ENCODE measurements at regions of chr16 and their contacts with region 1.

Region 1: DNA sequence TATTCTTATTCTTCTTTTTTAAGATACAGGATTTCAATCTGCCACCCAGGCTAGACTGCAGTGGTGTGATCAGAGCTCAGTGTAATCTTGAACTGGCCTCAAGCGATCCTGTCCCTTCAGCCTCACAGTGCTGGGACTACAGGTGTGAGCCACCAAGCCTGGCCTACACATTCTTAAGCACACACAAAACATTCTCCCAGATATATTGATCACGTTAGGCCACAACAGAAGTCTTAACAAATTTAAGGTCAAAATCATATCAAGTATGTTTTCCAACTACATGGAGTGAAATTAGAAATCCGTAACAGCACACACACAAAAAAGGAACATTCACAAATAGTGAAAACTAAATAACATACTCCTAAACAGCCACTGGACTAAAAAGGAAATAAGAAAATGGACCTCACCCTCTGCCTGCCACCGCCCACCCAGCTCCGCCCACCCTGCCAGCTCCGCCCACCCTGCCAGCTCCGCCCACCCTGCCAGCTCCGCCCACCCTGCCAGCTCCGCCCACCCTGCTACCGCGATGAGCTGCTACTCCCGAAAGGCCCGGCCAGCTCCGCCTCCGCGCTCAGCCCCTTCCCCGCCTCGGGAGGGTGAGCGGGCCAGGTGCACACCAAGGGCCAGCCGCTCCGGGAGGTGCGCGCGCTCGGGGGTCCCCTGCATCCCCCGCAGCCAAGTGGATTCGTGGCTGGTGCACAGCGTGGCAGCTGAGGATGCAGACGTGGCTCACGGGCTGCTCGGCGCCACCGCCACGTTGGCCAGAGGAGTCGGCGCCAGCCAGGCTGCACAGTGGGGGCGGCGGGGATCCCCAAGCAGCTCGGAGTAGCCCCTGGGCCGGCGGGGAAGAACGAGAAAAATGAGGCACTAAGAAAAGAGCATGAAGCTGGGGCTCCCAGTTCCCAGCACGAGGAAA is 41.2 kb downstream of the C16orf87 start:
- DNase-seq: peak; percentile 57
- ATAC-seq: peak; percentile 93
- H3K4me3 ChIP-seq: peak overlapping the region; percentile 73
- H3K27ac ChIP-seq: peak overlapping the region; percentile 91
- H3K4me1 ChIP-seq: peaks cover 43% of the 10 kb centered on the region
- H3K27me3 ChIP-seq: no peaks in the 10 kb centered on the region
- CTCF ChIP-seq: no peak
- EP300 ChIP-seq: no peak
- POLR2A ChIP-seq: peak; percentile 96
- RAD21 ChIP-seq: no peak

Region 2: DNA sequence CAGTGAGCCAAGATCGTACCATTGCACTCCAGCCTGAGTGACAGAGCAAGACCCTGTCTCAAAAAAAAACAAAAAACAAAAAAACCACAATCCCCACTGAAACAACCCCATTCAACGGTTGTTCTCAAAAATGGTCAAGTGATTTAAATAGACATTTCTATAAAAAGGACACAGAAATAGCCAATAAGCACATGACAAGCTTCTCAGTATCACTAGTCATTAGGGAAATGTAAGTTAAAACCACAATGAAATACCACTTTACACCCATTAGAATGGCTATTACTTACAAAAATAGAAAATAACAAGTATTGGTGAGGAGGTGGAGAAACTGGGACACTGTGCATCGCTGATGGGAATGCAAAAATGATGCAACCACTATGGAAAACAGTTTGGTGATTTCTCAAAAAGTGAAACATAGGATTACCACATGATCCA is 15.0 kb before region 1 on chr16:
- CTCF ChIA-PET with region 1: interaction called, 13 read pairs
- POLR2A ChIA-PET with region 1: interaction called, 4 read pairs
- RAD21 ChIA-PET with region 1: interaction called, 4 read pairs
- SMC1A ChIA-PET with region 1: interaction called, 12 read pairs
- in situ Hi-C with region 1: no loop called
- intact Hi-C with region 1: no loop called
- DNase-seq: peak; percentile 60
- ATAC-seq: peak; percentile 86
- H3K4me3 ChIP-seq: no peak overlapping the region
- H3K27ac ChIP-seq: peak overlapping the region; percentile 53; the same call in 1 of the 2 replicates
- H3K4me1 ChIP-seq: peaks cover 17% of the 10 kb centered on the region
- H3K27me3 ChIP-seq: no peaks in the 10 kb centered on the region
- CTCF ChIP-seq: no peak
- EP300 ChIP-seq: peak in 1 of 2 experiments; percentile 81; a peak in 2 of 4 replicates
- POLR2A ChIP-seq: no peak
- RAD21 ChIP-seq: no peak

Region 3: DNA sequence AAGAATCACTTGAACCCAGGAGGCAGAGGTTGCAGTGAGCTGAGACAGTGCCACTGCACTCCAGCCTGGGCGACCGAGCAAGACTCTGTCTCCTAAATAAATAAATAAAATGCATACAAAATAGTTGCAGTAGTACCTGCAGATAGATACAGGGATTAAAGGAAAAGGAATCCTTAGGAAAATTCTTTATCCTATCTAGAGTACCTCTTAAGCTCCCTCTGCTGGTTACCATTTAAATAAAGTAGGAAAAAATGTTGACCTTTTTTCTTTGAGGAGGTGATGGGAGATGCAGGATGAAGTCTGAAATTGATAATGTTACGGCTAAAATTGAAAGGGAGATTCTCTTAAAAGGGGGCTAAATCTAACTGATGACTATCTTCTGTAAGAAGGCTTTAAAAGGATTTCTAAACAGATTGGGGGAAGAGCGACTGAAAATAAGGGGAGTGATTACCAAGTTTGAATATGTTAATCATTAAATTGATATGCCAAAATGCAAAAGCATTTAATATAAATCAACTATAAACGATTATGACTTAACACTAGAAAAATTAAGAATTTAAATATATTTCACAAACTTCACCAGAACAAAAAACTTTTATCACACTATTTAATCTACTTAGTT is 11.8 kb after region 1 on chr16:
- CTCF ChIA-PET with region 1: interaction called, 79 read pairs
- POLR2A ChIA-PET with region 1: interaction called, 12 read pairs
- RAD21 ChIA-PET with region 1: interaction called, 30 read pairs
- SMC1A ChIA-PET with region 1: interaction called, 25 read pairs
- in situ Hi-C with region 1: no loop called
- intact Hi-C with region 1: no loop called
- DNase-seq: no peak
- ATAC-seq: no peak
- H3K4me3 ChIP-seq: no peak overlapping the region
- H3K27ac ChIP-seq: no peak overlapping the region
- H3K4me1 ChIP-seq: no peaks in the 10 kb centered on the region
- H3K27me3 ChIP-seq: no peaks in the 10 kb centered on the region
- CTCF ChIP-seq: peak in 1 of 3 experiments; percentile 6; a peak in 1 of 6 replicates
- EP300 ChIP-seq: no peak
- POLR2A ChIP-seq: no peak
- RAD21 ChIP-seq: peak; percentile 39; the same call in 1 of the 2 replicates

Region 4: DNA sequence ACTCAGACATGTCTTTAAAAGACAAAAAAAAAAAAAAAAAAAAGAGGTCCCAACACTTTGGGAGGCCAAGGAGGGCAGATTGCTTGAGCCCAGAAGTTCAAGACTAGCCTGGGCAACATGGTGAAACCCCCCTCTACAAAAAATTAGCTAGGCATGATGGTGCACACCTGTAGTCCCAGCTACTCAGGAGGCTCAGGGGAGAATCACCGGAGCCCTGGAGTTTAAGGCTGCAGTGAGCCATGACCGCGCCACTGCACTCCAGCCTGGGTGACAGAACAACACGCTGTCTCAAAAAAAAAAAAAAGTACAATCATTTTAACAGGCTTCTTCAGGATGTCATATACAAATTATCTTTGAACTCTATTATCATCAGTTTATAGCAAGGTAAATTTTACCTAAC is 19.2 kb after region 1 on chr16:
- CTCF ChIA-PET with region 1: interaction called, 4 read pairs
- POLR2A ChIA-PET with region 1: interaction called, 11 read pairs
- RAD21 ChIA-PET with region 1: interaction called, 7 read pairs
- SMC1A ChIA-PET with region 1: interaction called, 10 read pairs
- in situ Hi-C with region 1: no loop called
- intact Hi-C with region 1: no loop called
- DNase-seq: no peak
- ATAC-seq: peak; percentile 76
- H3K4me3 ChIP-seq: 0 out of 2 replicates have a peak overlapping the region, but pooled peaks have one; percentile 33
- H3K27ac ChIP-seq: no peak overlapping the region
- H3K4me1 ChIP-seq: peaks cover 22% of the 10 kb centered on the region
- H3K27me3 ChIP-seq: no peaks in the 10 kb centered on the region
- CTCF ChIP-seq: no peak
- EP300 ChIP-seq: no peak
- POLR2A ChIP-seq: no peak
- RAD21 ChIP-seq: no peak

Region 5: GRCh38 chr16:46822270-46822669 is 32.5 kb after region 1 on chr16:
- CTCF ChIA-PET with region 1: interaction called, 4 read pairs
- POLR2A ChIA-PET with region 1: interaction called, 11 read pairs
- RAD21 ChIA-PET with region 1: interaction called, 10 read pairs
- SMC1A ChIA-PET with region 1: interaction called, 14 read pairs
- in situ Hi-C with region 1: no loop called
- intact Hi-C with region 1: loop called (anchors 5 kb)
- DNase-seq: peak; percentile 57
- ATAC-seq: peak; percentile 79
- H3K4me3 ChIP-seq: peak overlapping the region; percentile 54; the same call in 1 of the 2 replicates
- H3K27ac ChIP-seq: peak overlapping the region; percentile 88
- H3K4me1 ChIP-seq: peaks cover 26% of the 10 kb centered on the region
- H3K27me3 ChIP-seq: no peaks in the 10 kb centered on the region
- CTCF ChIP-seq: no peak
- EP300 ChIP-seq: peak in 1 of 2 experiments; percentile 69; a peak in 2 of 4 replicates
- POLR2A ChIP-seq: no peak
- RAD21 ChIP-seq: 0 out of 2 replicates have a peak, but pooled peaks have one; percentile 3

Region 6: DNA sequence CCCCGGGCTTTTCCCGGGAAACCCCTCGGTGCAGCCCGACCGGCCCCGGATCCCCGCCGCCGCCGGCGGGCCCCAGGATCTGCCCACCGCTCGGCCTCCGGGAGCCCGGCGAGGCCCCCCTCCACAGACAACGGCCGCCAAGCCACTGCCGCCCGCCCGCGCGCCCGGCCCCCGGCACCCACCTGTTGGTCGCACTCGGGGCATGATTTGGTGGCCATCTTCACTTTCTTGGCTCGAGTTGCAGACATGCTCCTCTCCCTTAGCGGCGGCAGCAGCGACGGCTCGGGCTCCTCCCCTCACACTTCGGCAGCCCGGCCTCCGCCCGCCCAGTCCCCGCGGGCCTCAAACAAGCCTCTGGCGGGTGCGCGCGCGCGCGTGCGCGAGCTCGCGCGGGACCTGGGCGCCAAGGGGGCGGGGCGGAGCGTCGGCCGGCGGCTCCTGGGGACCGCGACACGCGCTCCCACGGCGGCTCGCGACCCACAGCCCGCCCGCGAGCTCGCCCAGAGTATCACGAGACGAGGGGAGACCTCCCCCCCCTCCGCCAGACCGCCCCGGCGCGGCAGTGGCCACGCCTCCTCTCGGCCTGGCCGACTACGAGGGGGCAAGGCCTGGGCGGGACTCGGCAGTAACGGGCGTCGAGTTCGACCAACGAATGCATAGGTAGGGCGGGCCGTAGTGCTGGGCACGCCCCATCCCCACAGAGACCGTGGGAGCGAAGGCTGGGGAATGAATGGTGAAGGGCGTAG is 41.3 kb after region 1 on chr16 and contains the start of gene C16orf87:
- CTCF ChIA-PET with region 1: interaction called, 5 read pairs
- POLR2A ChIA-PET with region 1: interaction called, 20 read pairs
- RAD21 ChIA-PET with region 1: interaction called, 14 read pairs
- SMC1A ChIA-PET with region 1: interaction called, 40 read pairs
- in situ Hi-C with region 1: no loop called
- intact Hi-C with region 1: loop called (anchors 5 kb)
- DNase-seq: peak; percentile 63
- ATAC-seq: peak; percentile 93
- H3K4me3 ChIP-seq: peak within 1 kb of the TSS; percentile 81
- H3K27ac ChIP-seq: peak within 1 kb of the TSS; percentile 72
- H3K4me1 ChIP-seq: peaks cover 6% of the 10 kb centered on the region; the same call in 1 of the 2 replicates
- H3K27me3 ChIP-seq: no peaks in the 10 kb centered on the region
- CTCF ChIP-seq: no peak
- EP300 ChIP-seq: 0 out of 4 replicates have a peak, but pooled peaks of 1 of the 2 experiments have one; percentile 16
- POLR2A ChIP-seq: peak; percentile 81
- RAD21 ChIP-seq: no peak
- polyA plus RNA-seq, gene C16orf87: 49.0 to 51.8 TPM